ENCODE measurements at regions of chr11 and their contacts with region 1.

Region 1: GRCh38 chr11:1694064-1694845 is 2.7 kb upstream of the KRTAP5-6 start:
- DNase-seq: peak; percentile 85
- ATAC-seq: peak; percentile 91
- H3K4me3 Mint-ChIP-seq: no peak overlapping the region
- H3K27ac Mint-ChIP-seq: no peak overlapping the region
- H3K4me1 Mint-ChIP-seq: peaks cover 5% of the 10 kb centered on the region
- H3K27me3 Mint-ChIP-seq: peaks cover 14% of the 10 kb centered on the region
- CTCF ChIP-seq: peak; percentile 76

Region 2: DNA sequence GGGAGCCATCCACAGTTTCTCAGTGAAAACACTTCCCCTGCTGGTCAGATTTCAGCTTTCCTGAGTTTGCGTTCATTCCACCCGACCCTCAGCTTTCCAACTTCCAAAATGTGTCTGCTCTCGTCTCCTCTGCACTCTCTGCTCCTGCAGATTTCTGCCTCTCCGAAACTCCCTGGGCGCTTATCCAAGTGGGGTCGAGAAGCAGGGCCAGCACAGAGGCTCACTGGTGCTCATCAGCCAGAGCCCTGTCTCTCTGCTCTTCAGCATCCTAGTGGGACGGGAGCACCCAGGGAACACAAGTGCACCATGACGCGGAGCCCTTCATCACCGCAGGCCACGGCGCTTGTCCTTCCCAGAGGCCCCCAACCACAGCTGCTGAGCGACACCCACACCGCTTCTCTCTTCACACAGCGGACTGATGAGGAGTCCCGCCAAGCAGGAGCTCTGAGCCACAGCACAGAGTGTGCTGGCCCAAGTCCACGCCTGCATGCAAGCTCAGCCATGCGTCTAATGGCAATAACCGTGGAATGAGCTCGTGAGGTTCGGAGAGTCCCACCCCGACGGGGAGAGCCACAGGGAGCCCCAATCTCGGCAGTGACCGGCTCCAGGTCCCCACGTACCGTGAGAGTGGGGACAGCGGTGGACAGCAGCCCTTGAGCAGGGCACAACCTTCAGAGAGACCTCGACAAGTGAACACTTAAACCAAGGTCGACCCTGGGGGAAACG is 179.8 kb before region 1 on chr11:
- CTCF ChIA-PET with region 1: no interaction called
- POLR2A ChIA-PET with region 1: no interaction called
- intact Hi-C with region 1: no loop called
- DNase-seq: no peak
- ATAC-seq: no peak
- H3K4me3 Mint-ChIP-seq: no peak overlapping the region
- H3K27ac Mint-ChIP-seq: no peak overlapping the region
- H3K4me1 Mint-ChIP-seq: peaks cover 55% of the 10 kb centered on the region
- H3K27me3 Mint-ChIP-seq: no peaks in the 10 kb centered on the region
- CTCF ChIP-seq: no peak

Region 3: GRCh38 chr11:1640076-1640946 is 53.9 kb before region 1 on chr11:
- CTCF ChIA-PET with region 1: interaction called, 22 read pairs
- POLR2A ChIA-PET with region 1: no interaction called
- intact Hi-C with region 1: no loop called
- DNase-seq: peak; percentile 26
- ATAC-seq: peak; percentile 42
- H3K4me3 Mint-ChIP-seq: no peak overlapping the region
- H3K27ac Mint-ChIP-seq: no peak overlapping the region
- H3K4me1 Mint-ChIP-seq: no peaks in the 10 kb centered on the region
- H3K27me3 Mint-ChIP-seq: peaks cover 9% of the 10 kb centered on the region
- CTCF ChIP-seq: peak; percentile 95

Region 4: DNA sequence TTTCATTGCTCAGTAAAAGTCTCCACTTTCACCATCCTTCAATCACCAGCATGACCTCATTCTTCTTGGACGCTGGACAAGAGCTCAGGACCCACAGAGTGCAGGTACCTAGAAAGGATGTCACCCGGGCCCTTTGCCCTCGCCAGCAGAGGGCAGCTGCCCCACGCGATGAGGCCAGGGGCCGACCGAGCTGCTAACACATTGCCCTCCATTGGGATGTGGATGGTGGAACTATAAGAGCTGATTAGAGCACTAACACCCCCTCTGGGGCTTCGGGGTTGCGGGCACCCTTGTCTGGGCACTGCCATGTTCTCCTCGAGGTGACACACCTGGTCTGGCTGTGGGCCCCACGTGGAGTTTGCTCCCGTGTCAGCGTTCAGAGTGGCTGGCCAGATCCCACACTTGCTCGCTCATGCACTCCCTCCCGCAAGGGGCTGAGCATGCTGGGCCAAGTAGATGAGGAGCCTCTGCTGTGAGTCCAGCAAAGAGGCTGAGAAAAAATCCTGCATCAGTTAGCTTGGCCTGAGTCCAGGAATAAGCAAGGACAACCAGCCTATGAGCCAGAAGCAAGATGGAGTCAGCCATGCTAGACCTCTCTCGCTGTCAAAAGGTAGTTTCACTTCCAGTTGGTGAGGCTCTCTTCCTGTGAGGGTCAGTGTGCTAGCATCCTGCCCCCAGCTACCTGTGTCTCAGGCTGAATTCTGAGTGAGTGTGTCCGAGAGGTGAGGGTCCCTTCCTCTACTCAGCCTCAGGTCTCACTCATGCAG is 12.6 kb after region 1 on chr11:
- CTCF ChIA-PET with region 1: interaction called, 41 read pairs
- POLR2A ChIA-PET with region 1: no interaction called
- intact Hi-C with region 1: no loop called
- DNase-seq: peak; percentile 52
- ATAC-seq: peak; percentile 49
- H3K4me3 Mint-ChIP-seq: no peak overlapping the region
- H3K27ac Mint-ChIP-seq: no peak overlapping the region
- H3K4me1 Mint-ChIP-seq: peaks cover under 1% of the 10 kb centered on the region
- H3K27me3 Mint-ChIP-seq: no peaks in the 10 kb centered on the region
- CTCF ChIP-seq: peak; percentile 48

Region 5: DNA sequence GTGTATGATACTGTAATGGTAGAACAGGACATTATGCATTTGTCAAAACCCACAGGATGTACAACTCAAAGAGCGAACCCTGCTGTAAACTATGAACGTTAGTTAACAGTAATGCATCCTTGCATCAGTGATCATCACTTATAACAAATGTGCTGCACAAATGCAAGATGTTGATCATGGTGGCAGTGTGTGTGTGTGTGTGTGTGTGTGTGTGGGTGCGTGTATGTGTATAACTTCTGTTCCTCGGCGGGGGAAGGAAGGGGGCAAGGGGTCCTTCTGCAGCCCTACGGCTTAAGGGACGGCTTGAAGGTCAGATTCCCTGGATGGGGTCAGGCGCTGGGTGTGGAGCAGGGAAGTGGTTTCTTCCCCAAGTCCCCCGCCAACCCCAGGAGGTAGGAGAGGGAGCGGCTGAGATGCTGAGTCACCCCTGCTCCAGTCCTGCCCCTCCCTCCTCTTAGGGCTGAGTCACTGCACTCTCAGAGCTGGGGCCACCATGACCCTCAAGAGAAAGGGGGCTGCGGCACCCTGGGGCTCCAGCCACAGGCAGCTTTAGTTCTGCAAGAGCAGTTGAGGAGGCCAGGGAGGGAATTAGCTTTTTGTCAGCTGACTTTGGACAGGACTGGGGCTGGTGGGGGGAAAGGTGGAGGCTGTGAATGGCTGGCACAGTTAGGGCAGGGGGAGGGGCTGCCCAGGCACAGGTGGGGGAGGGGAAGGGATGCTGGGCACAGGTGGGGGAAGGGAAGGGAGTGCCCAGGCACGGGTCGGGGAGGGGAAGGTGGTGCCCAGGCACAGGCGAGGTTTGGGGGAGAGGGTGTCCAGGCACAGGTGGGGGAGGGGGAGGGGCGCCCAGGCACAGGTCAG is 78.2 kb after region 1 on chr11:
- CTCF ChIA-PET with region 1: interaction called, 10 read pairs
- POLR2A ChIA-PET with region 1: no interaction called
- intact Hi-C with region 1: no loop called
- DNase-seq: peak; percentile 77
- ATAC-seq: peak; percentile 96
- H3K4me3 Mint-ChIP-seq: peak overlapping the region; percentile 18
- H3K27ac Mint-ChIP-seq: peak overlapping the region; percentile 75
- H3K4me1 Mint-ChIP-seq: peaks cover 18% of the 10 kb centered on the region
- H3K27me3 Mint-ChIP-seq: no peaks in the 10 kb centered on the region
- CTCF ChIP-seq: no peak

Region 6: DNA sequence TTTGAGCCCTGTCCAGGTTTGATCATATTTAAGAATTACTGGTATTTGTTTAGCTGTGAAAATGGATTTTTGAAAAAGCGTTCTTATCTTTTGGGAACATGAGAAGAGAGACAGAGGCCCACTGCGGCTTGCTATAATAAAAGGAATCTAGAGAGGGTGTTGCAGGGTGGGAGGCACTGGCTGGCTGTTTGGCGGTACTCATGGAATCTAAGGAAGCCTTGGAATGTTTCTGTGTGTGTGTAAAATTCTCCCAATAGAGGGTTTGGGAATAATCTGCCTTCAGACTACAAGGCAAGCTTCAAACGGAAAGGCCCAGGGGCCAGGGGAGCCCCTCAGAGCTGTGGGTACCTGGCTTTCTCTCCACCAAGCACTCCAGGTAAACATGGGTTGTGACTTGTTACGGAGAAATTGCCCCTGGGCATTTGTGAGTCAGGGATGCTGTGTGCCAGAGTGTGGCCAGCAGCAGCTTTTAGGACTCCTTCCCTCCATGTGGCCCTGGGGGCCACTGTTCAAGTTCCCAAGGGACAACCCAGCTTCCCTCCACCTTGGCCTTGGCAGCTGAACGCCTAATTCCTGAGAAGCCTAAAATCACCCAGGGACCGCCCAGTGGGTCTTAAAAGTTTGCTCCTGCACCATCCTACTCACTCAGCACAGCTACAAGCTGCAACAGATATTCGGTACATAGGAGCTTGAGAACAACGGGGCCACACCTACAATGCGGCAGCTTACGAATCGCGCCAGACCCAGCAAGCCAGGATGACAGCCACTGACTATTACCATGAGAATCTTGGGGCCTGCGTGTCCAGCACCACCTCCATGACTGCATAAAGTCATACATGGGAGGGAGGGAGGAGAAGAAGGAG is 126.4 kb after region 1 on chr11:
- CTCF ChIA-PET with region 1: interaction called, 26 read pairs
- POLR2A ChIA-PET with region 1: no interaction called
- intact Hi-C with region 1: no loop called
- DNase-seq: no peak
- ATAC-seq: no peak
- H3K4me3 Mint-ChIP-seq: no peak overlapping the region
- H3K27ac Mint-ChIP-seq: no peak overlapping the region
- H3K4me1 Mint-ChIP-seq: no peaks in the 10 kb centered on the region
- H3K27me3 Mint-ChIP-seq: no peaks in the 10 kb centered on the region
- CTCF ChIP-seq: no peak

Region 7: DNA sequence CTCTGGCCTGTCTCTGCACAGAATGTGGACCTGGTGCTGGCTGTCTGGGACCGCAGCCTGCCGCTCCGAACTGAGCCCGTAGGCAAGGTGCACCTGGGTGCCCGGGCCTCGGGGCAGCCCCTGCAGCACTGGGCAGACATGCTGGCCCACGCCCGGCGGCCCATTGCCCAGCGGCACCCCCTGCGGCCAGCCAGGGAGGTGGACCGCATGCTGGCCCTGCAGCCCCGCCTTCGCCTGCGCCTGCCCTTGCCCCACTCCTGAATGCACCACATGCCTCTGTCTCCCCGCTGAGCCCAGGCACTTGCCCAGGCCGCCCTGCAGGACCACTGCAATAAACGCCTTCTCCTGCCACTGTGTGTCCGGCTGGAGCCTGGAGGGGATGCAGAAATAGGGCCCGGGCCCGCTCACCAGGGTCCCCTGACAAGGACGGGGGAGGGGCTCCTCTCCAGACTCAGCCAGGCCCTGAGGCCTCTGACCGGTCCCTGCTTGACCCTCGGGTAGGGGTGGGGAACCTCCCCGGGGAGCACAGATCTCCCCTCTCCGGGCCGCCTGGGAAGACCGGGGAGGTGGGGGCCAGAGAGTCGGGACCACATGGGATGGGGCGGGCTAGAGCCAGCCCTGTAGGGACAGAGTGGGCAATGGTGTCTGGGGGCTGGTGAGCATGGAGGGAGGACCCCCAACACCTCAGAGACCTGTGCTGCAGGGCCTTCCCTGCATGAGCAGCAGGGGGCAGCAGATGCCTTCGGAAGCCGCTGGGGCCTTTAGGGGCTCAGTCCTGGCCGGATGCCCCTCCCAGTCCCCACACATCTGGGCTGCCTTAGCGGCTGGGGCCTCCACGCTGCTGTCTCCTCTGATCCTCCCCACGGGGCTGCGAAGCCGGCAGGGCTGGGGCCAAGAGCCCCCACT is 143.2 kb after region 1 on chr11:
- CTCF ChIA-PET with region 1: interaction called, 336 read pairs
- POLR2A ChIA-PET with region 1: interaction called, 7 read pairs
- intact Hi-C with region 1: loop called (anchors 2 kb)
- DNase-seq: peak; percentile 91
- ATAC-seq: peak; percentile 97
- H3K4me3 Mint-ChIP-seq: no peak overlapping the region
- H3K27ac Mint-ChIP-seq: no peak overlapping the region
- H3K4me1 Mint-ChIP-seq: peaks cover 6% of the 10 kb centered on the region
- H3K27me3 Mint-ChIP-seq: no peaks in the 10 kb centered on the region
- CTCF ChIP-seq: peak; percentile 94

Region 8: GRCh38 chr11:2002807-2003206 is 308.6 kb after region 1 on chr11:
- CTCF ChIA-PET with region 1: interaction called, 64 read pairs
- POLR2A ChIA-PET with region 1: no interaction called
- intact Hi-C with region 1: no loop called
- DNase-seq: no peak
- ATAC-seq: peak; percentile 76
- H3K4me3 Mint-ChIP-seq: no peak overlapping the region
- H3K27ac Mint-ChIP-seq: no peak overlapping the region
- H3K4me1 Mint-ChIP-seq: no peaks in the 10 kb centered on the region
- H3K27me3 Mint-ChIP-seq: no peaks in the 10 kb centered on the region
- CTCF ChIP-seq: no peak

Measured in activated CD8-positive, alpha-beta T cell treated with anti-CD3 and anti-CD28 coated beads for 36 hours (primary cell).